HEK293T (cell line): ENCODE measurements at regions of chr13 and their contacts with region 1.

Region 1: DNA sequence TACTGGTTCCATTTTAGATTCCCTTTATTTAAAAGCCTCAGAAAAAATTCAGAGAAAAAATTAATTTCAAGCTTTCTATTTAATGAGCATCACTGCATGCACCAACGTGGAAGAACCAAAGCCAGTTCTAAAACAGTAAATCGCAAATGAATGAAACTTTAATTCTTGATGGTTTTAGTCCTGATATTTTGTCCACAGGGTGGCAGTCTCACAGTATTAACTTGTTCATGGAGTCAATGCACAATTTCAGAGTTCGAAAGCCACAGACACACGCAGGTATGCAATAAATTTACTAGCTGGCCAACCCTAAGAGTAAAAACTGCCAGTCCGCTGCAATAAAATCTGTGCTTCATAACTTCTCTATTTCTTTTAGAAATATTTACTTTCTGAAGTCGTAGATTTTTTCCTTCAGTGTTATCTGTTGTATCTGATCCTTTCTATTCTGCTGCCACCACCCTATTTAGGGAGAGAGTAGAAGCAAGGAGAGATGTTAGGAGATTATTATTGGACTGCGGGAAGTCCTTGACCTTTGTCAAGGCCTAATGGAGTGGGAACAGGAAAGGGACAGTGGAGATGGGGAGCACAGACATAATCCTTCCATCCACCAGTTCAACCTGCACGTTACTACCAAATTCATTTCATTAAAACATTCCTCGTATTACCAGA is 7.0 kb upstream of the WBP4 start:
- DNase-seq: peak; percentile 28

Region 2: DNA sequence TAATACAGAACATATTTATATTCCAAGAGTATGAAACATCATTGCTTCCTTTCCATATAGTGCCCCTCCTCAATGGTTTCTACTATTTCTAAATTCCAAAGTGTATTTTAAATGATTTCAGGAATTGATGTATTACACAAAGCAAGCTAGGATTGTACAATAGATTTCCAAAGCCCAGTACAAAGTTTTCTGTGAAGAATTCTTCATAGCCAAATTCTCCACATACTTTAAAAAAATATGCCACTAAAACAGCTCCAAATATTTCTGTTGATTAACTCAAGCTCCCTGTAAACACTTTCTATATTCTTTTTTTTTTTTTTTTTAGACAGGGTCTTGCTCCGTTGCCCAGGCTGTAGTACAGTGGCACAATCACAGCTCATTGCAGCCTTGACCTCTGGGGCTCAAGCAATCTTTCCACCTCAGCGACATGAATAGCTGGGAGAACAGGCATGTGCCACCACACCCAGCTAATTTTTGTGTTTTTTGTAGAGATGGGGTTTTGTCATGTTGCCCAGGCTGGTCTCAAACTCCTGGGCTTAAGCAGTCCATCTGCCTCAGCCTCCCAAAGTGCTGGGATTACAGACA is 85.8 kb before region 1 on chr13:
- CTCF ChIA-PET with region 1: interaction called, 10 read pairs
- POLR2A ChIA-PET with region 1: no interaction called
- DNase-seq: no peak

Region 3: DNA sequence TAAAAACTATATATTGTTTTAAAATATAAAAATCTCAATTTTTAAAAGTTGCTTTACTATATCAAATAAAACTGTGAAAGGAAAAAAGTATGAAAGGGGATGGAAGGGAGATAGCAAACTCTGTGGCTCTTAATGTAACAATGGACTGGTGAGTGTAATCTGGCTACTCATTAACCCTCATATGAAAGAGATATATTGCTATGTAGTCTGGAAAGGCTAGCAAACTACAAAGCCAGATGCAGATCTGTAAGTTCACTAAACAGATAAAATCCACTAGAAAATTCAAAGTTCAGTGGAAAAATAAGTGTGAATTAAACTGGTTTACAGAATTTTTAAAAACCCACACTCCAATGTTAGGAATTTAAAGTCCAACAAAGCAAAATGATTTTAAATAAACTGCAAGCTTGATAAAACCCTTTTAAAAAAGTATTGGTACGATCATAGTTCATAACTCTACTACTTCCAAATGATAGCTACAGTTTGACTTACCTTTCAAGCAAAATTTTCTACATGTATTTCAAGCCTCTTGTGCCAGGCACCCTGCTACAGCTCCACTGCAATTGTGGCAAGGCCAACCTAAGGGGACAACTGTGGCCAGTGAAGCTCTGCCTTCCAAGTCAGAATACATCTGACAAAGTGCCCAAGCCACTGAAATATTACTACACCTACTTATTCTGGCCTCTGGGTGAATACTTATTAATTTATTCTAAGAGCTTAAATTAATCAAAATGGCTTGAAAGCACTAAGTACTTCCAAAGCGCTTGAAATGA is 34.6 kb before region 1 on chr13:
- CTCF ChIA-PET with region 1: interaction called, 12 read pairs
- POLR2A ChIA-PET with region 1: interaction called, 5 read pairs
- DNase-seq: no peak